H1 (cell line): ENCODE measurements at regions of chr15 and their contacts with region 1.

Region 1: DNA sequence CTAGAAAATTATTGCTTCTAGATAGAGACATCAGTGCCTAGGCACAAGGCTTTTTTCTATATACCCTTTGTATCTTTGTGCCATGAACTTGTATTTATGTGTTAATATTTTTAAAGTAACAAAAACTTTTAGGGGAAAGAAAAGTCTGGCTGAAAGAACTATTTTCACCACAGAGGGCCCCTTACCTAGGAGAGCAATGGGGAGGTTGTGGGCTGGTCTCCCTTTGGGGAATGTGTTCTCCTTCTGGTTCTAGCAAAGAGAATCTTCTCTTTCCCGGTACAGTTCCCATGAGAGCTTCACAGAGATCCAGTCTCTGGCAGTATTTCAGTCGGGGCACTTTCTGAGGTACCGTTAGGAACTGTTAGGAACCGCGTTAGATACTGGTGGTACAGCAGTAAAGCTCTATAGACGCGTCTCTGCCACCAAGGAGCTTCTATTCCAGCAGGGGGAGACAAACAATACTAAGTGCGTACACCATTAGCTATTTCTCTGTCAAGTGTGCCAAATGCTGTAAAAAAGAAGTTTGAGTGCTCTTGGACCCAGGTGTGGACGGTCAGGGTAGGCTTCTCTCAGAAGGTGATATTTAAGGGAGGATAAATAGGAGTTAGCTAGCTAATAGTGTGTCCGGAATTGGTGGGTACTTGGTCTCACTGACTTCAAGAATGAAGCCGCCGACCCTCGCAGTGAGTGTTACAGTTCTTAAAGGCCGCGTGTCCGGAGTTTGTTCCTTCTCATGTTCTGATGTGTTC is 4.6 kb upstream of the EPB42 start:
- DNase-seq: no peak
- H3K4me3 ChIP-seq: no peak overlapping the region
- H3K27ac ChIP-seq: no peak overlapping the region
- H3K4me1 ChIP-seq: no peaks in the 10 kb centered on the region
- H3K27me3 ChIP-seq: no peaks in the 10 kb centered on the region
- CTCF ChIP-seq: peak in 2 of 3 experiments; percentile 79 to 88; a peak in 3 of 4 replicates
- EP300 ChIP-seq: no peak
- POLR2A ChIP-seq: no peak
- RAD21 ChIP-seq: peak; percentile 76 to 79

Region 2: GRCh38 chr15:42984493-42985034 is 240.8 kb before region 1 on chr15:
- CTCF ChIA-PET with region 1: no interaction called
- POLR2A ChIA-PET with region 1: no interaction called
- DNase-seq: no peak
- H3K4me3 ChIP-seq: no peak overlapping the region
- H3K27ac ChIP-seq: no peak overlapping the region
- H3K4me1 ChIP-seq: no peaks in the 10 kb centered on the region
- H3K27me3 ChIP-seq: no peaks in the 10 kb centered on the region
- CTCF ChIP-seq: no peak
- EP300 ChIP-seq: no peak
- POLR2A ChIP-seq: no peak
- RAD21 ChIP-seq: no peak

Region 3: DNA sequence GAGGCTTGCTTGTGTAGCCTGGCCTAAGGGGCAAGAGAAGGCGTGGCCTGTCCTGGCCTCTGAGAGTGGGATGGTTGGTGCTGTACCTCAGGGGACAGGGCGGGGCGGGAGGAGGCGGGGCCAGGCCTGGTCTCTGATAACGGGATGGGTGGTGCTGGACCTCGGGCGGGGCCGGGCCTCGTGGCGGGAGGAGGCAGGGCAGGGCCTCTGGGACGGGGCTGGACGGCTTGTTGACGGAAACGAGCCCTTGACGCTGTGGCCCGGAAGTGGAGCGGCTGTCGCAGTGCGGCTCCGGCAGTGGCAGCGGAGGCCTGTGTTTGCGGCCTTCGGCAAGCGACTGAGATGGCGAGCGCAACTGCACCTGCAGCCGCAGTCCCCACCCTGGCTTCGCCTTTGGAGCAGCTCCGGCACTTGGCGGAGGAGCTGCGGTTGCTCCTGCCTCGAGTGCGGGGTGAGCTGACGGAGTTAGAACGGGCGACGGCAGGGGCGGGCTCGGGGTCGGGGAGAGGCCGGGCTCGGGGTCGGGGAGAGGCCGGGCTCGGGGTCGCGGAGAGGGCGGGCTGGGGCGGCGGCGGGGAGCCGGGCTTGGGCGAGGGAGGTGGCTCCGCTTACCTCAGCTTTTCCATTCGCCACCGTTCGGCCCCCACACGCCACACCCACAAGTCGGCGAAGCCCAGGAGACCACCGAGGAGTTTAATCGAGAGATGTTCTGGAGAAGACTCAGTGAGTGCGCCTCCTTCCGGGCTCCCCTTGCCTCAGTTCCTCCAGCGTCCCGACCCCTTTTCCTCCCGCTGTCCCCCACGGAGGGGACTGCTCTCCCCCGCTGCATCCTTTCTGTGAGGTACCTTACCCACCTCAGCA is 40.0 kb before region 1 on chr15 and contains the start of gene CCNDBP1:
- CTCF ChIA-PET with region 1: interaction called, 11 read pairs
- POLR2A ChIA-PET with region 1: no interaction called
- DNase-seq: peak; percentile 87 to 95
- H3K4me3 ChIP-seq: peak within 1 kb of the TSS; percentile 64 to 93 (median 89)
- H3K27ac ChIP-seq: 0 out of 2 replicates have a peak within 1 kb of the TSS, but pooled peaks have one; percentile 54
- H3K4me1 ChIP-seq: peaks cover 4 to 8% (median 5%) of the 10 kb centered on the region in 4 experiments; a peak in 5 of 7 replicates
- H3K27me3 ChIP-seq: no peaks in the 10 kb centered on the region
- CTCF ChIP-seq: peak; percentile 28 to 59 (median 56); a peak in 3 of 4 replicates
- EP300 ChIP-seq: no peak
- POLR2A ChIP-seq: peak in 1 of 2 experiments; percentile 56; a peak in 1 of 3 replicates
- RAD21 ChIP-seq: peak; percentile 15 to 16; a peak in 1 of 4 replicates
- total RNA-seq, gene CCNDBP1: 23.4 TPM in 2 replicates

Region 4: DNA sequence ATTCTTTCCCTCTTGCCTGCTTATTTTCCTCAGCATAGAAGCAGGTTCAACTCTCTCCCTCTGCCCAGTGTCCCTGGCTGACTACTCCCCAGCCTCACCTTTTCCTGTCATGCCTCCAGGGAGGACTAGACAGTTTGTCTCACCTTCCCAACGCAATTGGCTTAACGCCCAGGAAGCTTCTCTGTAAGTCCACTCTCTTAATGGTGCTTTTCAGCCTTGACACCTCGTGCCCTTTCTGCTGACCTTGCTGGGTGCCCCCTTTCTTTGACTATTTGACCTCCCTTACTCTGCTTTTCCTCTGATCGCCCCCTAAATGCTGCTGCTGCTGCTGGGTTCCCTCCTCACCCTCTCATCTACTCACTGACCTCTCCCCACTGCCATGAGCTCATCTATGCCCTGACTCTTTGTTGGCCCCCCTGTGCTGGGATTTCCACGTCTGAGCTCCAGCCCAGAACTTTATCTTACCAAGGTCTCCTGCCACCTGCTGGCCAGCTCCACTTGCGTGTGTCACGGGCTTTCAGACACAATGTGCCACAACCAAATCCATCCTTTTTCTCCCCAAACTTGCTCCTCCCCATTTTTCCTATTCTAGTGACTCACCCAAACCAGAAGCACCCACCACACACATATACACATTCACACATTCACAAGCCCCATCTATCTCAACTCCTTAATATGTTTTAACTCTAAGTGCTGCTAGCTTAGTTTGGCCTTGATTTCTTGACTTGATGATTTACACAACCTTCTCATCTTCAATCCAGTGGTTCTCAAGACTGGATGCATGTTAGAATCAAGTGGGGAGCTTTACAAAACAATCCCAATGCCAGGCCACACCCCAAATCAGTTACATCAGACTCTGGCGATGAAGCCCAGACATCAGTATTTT is 21.1 kb before region 1 on chr15:
- CTCF ChIA-PET with region 1: interaction called, 109 read pairs
- POLR2A ChIA-PET with region 1: no interaction called
- DNase-seq: peak; percentile 44 to 67
- H3K4me3 ChIP-seq: no peak overlapping the region
- H3K27ac ChIP-seq: no peak overlapping the region
- H3K4me1 ChIP-seq: peaks cover 0 to 3% (median 0%) of the 10 kb centered on the region in 4 experiments; a peak in 1 of 7 replicates
- H3K27me3 ChIP-seq: no peaks in the 10 kb centered on the region
- CTCF ChIP-seq: peak; percentile 75 to 84 (median 77)
- EP300 ChIP-seq: no peak
- POLR2A ChIP-seq: no peak
- RAD21 ChIP-seq: peak; percentile 40 to 62; a peak in 3 of 4 replicates

Region 5: GRCh38 chr15:43246261-43246774 is 20.9 kb after region 1 on chr15:
- CTCF ChIA-PET with region 1: interaction called, 39 read pairs
- POLR2A ChIA-PET with region 1: interaction called, 3 read pairs
- DNase-seq: no peak
- H3K4me3 ChIP-seq: no peak overlapping the region
- H3K27ac ChIP-seq: no peak overlapping the region
- H3K4me1 ChIP-seq: no peaks in the 10 kb centered on the region
- H3K27me3 ChIP-seq: no peaks in the 10 kb centered on the region
- CTCF ChIP-seq: no peak
- EP300 ChIP-seq: no peak
- POLR2A ChIP-seq: no peak
- RAD21 ChIP-seq: no peak

Region 6: DNA sequence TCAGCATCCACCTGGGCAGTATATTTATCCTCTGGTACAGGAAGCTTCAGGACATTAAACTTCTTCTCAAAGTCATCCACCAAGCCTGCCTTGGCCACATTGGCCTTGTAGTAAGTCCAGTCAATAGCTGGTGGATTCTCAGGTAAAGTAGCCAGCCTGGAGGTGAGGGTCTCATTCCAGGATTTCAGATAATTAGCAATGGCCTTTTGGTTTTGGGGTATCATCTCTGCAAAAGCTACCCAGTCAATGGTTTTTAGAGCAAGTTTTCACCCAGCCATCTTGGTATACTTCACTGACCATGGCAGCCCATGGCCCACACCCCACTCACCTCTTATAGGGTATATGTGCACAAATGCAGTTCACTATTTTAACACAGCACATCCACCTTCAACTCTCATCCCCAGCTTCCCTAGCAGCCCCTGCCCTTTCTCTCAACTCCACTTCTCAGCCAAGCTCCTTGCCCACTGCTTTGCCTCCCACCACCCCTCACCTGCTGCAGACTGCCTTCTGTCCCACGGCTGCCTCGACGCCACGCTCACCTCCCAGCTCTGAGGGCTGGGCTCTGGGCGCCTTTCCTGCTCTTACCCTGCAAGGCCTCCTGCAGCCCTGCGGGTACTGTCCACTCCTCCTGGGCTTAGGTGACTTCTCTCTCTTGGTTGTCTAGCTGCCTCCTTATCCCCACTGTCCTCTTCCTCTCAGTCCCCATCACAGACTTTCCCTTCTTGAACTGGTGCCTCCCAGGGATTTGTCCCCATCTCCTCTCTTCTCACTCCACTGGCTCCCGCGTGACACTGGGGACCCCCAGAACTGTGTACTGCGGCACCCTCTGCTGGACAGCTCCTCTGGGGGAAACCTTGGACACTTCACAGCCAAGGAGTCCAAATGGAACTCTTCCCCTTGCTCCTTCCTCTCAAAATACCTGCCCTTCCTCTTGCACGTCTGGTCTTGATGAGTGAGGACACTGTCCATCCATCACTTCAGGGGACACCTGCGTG is 43.0 kb after region 1 on chr15:
- CTCF ChIA-PET with region 1: interaction called, 82 read pairs
- POLR2A ChIA-PET with region 1: no interaction called
- DNase-seq: peak in 1 of 2 experiments; percentile 69
- H3K4me3 ChIP-seq: no peak overlapping the region
- H3K27ac ChIP-seq: no peak overlapping the region
- H3K4me1 ChIP-seq: no peaks in the 10 kb centered on the region
- H3K27me3 ChIP-seq: no peaks in the 10 kb centered on the region
- CTCF ChIP-seq: peak; percentile 63 to 72 (median 70)
- EP300 ChIP-seq: no peak
- POLR2A ChIP-seq: no peak
- RAD21 ChIP-seq: peak; percentile 78 to 82

Region 7: DNA sequence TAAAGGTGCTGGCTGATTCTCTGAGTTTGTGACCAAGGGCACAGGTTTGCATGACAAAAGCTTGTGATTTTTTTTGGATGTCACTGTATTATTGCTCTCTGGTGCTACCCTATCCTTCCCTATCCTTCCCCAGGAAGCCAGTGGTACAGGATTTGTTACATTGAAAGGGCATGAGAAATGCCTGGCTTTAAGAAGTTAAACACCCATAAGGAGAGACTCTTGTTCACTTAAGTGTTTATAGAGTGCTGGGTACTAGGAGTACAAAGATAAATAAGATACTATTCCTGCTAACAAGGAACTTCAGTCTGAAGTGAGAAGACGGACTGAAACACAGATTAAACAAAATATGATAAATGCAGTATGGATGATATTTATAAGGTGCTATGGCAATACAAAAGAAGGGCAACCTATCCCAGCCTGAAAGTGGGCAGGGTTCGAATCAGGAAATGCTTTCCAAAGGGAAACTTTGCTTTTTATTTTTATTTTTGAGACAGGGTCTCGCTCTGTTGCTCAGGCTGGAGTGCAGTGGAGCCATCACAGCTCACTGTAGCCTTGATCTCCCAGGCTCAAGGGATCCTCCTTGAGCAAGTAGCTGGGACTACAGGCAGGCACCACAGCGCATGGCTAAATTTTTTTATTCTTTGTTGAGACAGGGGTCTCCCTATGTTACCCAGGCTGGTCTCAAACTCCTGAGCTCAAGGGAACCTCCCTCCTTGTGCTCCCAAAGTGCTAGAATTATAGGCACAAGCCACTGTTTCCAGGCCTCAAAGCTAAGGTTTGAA is 93.8 kb after region 1 on chr15:
- CTCF ChIA-PET with region 1: interaction called, 10 read pairs
- POLR2A ChIA-PET with region 1: no interaction called
- DNase-seq: no peak
- H3K4me3 ChIP-seq: no peak overlapping the region
- H3K27ac ChIP-seq: no peak overlapping the region
- H3K4me1 ChIP-seq: peaks cover 0 to 3% (median under 1%) of the 10 kb centered on the region in 4 experiments; a peak in 1 of 7 replicates
- H3K27me3 ChIP-seq: no peaks in the 10 kb centered on the region; a peak in 2 of 7 replicates
- CTCF ChIP-seq: peak in 1 of 3 experiments; percentile 22; a peak in 1 of 4 replicates
- EP300 ChIP-seq: no peak
- POLR2A ChIP-seq: no peak
- RAD21 ChIP-seq: peak; percentile 9 to 34; a peak in 1 of 4 replicates